AG04449 (cell line): ENCODE measurements at regions of chr2 and their contacts with region 1.

Region 1: GRCh38 chr2:113198790-113199612 is 25.2 kb downstream of the PSD4 start:
- DNase-seq: no peak
- H3K4me3 ChIP-seq: peak overlapping the region; percentile 83
- CTCF ChIP-seq: peak; percentile 89

Region 2: GRCh38 chr2:113034016-113034415 is 165.0 kb before region 1 on chr2:
- CTCF ChIA-PET with region 1: no interaction called
- POLR2A ChIA-PET with region 1: no interaction called
- DNase-seq: no peak
- H3K4me3 ChIP-seq: no peak overlapping the region
- CTCF ChIP-seq: no peak

Region 3: GRCh38 chr2:113080134-113080533 is 118.9 kb before region 1 on chr2:
- CTCF ChIA-PET with region 1: interaction called, 12 read pairs
- POLR2A ChIA-PET with region 1: no interaction called
- DNase-seq: no peak
- H3K4me3 ChIP-seq: no peak overlapping the region
- CTCF ChIP-seq: peak; percentile 70

Region 4: DNA sequence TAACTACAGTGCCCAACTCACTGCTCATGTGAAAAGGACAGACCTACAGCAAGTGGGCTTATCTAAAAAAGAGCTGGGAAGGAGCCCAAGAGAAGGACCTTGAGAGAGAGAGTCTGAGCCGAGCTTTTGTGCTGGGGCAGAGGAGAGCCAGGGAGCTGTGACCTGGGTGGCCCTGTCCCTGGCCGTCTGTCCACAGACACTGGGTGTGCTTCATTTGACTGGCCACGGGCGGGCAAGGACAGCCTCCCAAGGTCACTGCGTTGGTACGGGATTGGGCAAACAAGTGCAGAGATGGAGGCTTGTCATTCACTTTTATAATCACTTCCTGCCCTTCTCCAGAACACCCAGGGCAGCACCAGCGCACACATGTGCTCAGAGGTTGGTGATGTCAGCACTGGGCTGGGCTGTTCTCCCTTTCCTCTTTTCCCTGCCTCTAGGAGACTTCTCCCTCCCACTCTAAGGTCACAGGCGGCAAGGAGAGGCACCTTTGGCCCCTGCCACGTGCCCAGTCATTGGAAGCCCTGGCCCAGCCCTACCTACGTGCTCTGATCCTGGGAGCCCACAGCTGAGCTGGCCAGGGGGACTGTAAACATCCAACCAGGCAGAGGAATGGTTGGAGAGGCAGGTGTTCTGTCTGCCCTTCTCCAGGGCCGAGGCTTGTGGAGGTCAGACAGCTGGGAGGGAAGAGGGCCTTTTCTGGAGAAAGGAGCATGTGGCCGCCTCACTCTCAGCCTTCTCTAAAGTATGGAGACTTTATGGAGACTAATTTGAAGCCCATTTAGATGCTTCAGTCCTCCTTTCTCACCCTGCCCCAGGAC is 31.7 kb before region 1 on chr2:
- CTCF ChIA-PET with region 1: interaction called, 28 read pairs
- POLR2A ChIA-PET with region 1: no interaction called
- DNase-seq: no peak
- H3K4me3 ChIP-seq: no peak overlapping the region
- CTCF ChIP-seq: no peak

Region 5: GRCh38 chr2:113181258-113182051 is 17.5 kb before region 1 on chr2:
- CTCF ChIA-PET with region 1: interaction called, 17 read pairs
- POLR2A ChIA-PET with region 1: no interaction called
- DNase-seq: no peak
- H3K4me3 ChIP-seq: no peak overlapping the region
- CTCF ChIP-seq: no peak

Region 6: DNA sequence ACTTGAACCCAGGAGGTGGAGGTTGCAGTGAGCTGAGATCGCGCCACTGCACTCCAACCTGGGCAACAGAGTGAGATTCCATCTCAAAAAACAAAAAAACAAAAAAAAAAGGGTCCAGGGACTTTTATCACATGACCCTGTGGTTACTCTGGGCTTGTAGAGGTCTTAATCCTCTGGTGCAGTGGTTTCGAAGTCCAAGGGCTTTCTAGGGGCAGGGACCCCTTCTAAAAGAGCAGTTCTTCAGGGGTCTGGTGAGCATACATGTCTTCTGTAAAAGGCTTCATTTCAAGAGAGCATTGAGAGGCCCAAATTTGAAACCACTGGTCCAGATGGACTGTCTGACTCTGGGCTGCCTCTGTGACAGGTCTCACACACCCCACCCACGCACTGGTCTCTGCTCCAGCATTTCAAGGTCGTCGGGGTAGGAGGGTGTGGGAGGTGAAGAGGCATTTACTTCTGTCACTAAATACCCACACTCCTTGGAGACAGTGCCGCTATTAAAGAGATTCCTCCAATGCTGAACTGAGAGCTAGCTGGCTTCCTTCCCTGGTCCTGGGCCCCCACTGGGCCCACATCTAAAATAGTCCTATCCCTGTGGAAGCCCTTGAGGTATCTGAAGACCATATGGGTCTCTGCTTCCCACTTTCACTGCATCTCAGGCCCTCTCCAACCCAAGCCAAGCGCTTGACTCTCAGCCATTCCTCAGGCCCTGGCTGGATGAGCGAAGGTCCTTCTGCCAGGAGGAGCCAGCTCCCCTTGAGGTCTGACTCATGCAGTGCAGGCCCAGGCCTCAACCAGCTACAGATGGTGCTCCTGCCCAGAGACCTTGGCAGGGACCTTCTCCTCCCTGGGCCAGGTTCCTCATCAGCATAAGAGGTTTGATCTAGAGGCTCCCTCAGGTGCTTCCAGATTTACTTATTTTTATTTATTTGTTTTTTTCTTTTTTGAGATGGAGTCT is 34.9 kb after region 1 on chr2:
- CTCF ChIA-PET with region 1: interaction called, 240 read pairs
- POLR2A ChIA-PET with region 1: interaction called, 4 read pairs
- DNase-seq: no peak
- H3K4me3 ChIP-seq: no peak overlapping the region
- CTCF ChIP-seq: peak; percentile 37

Region 7: DNA sequence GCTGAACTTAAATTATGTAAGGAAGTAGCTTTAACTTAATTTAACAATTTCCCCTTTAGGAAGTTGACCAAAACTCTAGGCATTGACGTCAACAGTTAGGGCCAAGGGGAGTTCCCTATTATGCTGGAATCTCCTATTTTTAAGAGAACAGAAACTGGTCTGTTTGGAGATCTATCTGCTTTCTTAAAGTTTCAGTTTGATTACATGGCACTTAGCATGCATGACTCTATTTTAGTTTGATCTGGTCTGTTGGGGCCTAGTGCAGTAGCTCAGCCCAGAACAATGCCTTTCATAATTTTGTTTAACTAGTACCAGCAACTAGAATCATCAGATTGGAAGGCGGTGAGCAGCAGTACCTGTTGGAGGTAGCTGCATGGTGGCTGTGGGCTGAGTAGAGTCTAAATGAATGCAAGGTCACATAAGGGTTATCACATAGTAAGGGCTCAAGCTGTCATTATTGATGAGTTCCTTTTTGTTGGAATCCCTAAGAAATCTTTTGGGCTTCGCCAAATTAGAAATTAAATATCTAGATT is 178.0 kb after region 1 on chr2:
- CTCF ChIA-PET with region 1: interaction called, 198 read pairs
- POLR2A ChIA-PET with region 1: no interaction called
- DNase-seq: no peak
- H3K4me3 ChIP-seq: no peak overlapping the region
- CTCF ChIP-seq: no peak